ENCODE measurements at regions of chr11 and their contacts with region 1.

Region 1: DNA sequence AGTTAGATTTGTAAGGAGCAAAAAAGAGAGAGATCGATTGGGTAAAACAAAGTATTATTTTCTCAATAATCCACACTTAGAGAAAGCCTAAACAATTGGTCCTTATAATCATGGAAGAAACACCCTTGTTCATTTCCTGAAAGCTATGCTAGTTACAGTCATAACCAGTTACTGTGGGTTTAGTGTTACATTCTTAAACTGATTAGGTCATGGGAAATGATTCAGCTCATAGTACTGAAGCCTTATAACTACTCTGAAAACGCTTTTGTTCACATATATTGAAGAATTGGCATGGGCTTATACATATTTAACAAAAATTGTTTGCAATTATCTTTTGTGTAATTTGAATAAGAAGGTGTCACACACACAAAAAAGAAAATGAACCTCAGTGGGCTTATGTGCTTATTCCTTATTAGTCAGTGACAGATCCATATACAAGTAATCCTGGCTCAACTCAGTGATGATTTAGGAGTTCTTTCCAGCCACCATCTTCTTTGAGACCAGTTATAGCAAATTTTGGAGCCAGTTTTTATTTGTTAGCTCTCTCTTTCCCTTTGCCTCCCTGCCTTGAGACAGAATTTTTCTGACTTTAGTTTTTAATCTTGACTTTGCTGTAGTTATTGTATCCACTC is 198.5 kb upstream of the CTSC start:
- DNase-seq: peak; percentile 92
- H3K4me3 ChIP-seq: no peak overlapping the region
- H3K27ac ChIP-seq: peak overlapping the region; percentile 88
- H3K4me1 ChIP-seq: peaks cover 37% of the 10 kb centered on the region
- H3K27me3 ChIP-seq: no peaks in the 10 kb centered on the region
- CTCF ChIP-seq: no peak
- POLR2A ChIP-seq: peak; percentile 25

Region 2: GRCh38 chr11:88281317-88281712 is 254.7 kb before region 1 on chr11:
- CTCF ChIA-PET with region 1: no interaction called
- POLR2A ChIA-PET with region 1: no interaction called
- dilution Hi-C with region 1: no loop called
- intact Hi-C with region 1: loop called (anchors 5 kb)
- DNase-seq: no peak
- H3K4me3 ChIP-seq: no peak overlapping the region
- H3K27ac ChIP-seq: no peak overlapping the region
- H3K4me1 ChIP-seq: peaks cover 18% of the 10 kb centered on the region
- H3K27me3 ChIP-seq: no peaks in the 10 kb centered on the region
- CTCF ChIP-seq: no peak
- POLR2A ChIP-seq: no peak

Region 3: GRCh38 chr11:88337181-88337986 is 198.6 kb before region 1 on chr11 and contains the start of gene CTSC:
- CTCF ChIA-PET with region 1: interaction called, 3 read pairs
- POLR2A ChIA-PET with region 1: interaction called, 4 read pairs
- dilution Hi-C with region 1: no loop called
- intact Hi-C with region 1: loop called (anchors 2 kb)
- DNase-seq: peak; percentile 85
- H3K4me3 ChIP-seq: peak within 1 kb of the TSS; percentile 92 to 99 (median 95)
- H3K27ac ChIP-seq: peak within 1 kb of the TSS; percentile 78
- H3K4me1 ChIP-seq: peaks cover 27% of the 10 kb centered on the region
- H3K27me3 ChIP-seq: no peaks in the 10 kb centered on the region
- CTCF ChIP-seq: no peak
- POLR2A ChIP-seq: peak; percentile 96
- total RNA-seq, gene CTSC: 130 and 226 TPM in 2 replicates

Region 4: DNA sequence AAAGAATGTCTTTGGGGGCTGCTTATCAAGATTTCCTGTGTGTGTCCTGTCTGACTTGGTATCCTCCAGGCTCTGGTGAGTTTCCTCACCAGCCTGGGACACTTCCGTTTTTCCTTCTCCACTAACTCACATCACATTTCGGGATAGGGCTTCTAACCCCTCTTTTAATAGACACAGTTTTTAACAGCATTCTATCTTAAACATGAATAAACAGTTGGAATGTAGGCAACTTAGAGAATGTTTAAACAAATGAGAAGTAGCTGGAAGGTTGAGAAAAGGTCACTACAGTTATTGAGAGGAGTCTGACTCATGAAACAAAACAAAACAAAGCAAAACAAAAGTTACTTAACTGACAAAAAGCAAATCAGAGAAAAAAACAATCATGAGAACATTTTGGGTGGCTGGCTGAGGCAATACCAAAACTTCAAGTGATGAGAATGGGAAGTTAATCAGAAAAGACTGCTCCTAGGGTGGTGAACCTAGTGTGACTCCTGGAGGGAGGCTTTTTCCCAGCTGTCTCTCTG is 133.8 kb before region 1 on chr11:
- CTCF ChIA-PET with region 1: no interaction called
- POLR2A ChIA-PET with region 1: interaction called, 3 read pairs
- dilution Hi-C with region 1: no loop called
- intact Hi-C with region 1: loop called (anchors 2 kb)
- DNase-seq: peak; percentile 93
- H3K4me3 ChIP-seq: peak overlapping the region in 1 of 3 experiments; percentile 43
- H3K27ac ChIP-seq: peak overlapping the region; percentile 95
- H3K4me1 ChIP-seq: peaks cover 50% of the 10 kb centered on the region
- H3K27me3 ChIP-seq: no peaks in the 10 kb centered on the region
- CTCF ChIP-seq: no peak
- POLR2A ChIP-seq: no peak

Region 5: GRCh38 chr11:88484873-88485621 is 51.0 kb before region 1 on chr11:
- CTCF ChIA-PET with region 1: interaction called, 52 read pairs
- POLR2A ChIA-PET with region 1: no interaction called
- dilution Hi-C with region 1: no loop called
- intact Hi-C with region 1: no loop called
- DNase-seq: peak; percentile 37
- H3K4me3 ChIP-seq: no peak overlapping the region
- H3K27ac ChIP-seq: no peak overlapping the region
- H3K4me1 ChIP-seq: no peaks in the 10 kb centered on the region
- H3K27me3 ChIP-seq: no peaks in the 10 kb centered on the region
- CTCF ChIP-seq: peak; percentile 64 to 73
- POLR2A ChIP-seq: no peak

Region 6: GRCh38 chr11:88508759-88509581 is 27.1 kb before region 1 on chr11:
- CTCF ChIA-PET with region 1: interaction called, 3 read pairs
- POLR2A ChIA-PET with region 1: no interaction called
- dilution Hi-C with region 1: no loop called
- intact Hi-C with region 1: loop called (anchors 1 kb)
- DNase-seq: peak; percentile 57
- H3K4me3 ChIP-seq: peak overlapping the region in 2 of 3 experiments; percentile 6 to 47
- H3K27ac ChIP-seq: no peak overlapping the region
- H3K4me1 ChIP-seq: peaks cover 4% of the 10 kb centered on the region
- H3K27me3 ChIP-seq: no peaks in the 10 kb centered on the region
- CTCF ChIP-seq: no peak
- POLR2A ChIP-seq: no peak

Region 7: DNA sequence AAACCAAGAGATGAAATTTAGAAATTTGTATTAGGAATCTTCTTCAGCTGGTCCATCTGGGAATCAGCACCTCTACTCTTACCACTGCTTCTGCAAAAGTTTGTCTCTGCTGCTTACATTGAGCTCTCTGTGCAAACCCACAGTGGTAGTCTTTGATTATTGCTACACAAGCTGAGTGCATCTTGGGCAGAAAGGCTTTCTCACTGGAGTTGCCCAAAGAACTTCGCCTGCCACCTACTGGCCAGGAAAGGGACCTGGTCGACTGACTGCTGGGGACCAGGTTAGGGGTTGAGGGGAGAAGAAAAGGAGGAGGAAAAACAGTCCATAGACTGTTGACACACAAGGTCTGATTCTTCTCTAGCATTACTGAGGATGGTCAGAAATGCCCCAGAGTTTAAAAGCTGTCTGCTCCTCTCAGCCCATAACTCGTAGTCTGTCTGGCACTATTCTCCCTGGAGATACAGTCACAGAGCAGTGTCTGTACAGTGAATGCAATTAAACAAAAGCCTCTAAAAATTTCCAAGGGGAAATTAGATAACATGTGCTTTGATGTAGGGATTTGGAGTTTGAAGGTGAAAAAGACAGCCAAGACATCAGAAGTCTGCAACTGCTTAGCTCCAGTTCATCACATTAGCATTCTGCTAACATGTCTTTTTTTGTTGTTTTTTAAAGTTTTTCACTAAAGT is 16.5 kb after region 1 on chr11:
- CTCF ChIA-PET with region 1: interaction called, 10 read pairs
- POLR2A ChIA-PET with region 1: interaction called, 4 read pairs
- dilution Hi-C with region 1: no loop called
- intact Hi-C with region 1: loop called (anchors 1 kb)
- DNase-seq: no peak
- H3K4me3 ChIP-seq: no peak overlapping the region
- H3K27ac ChIP-seq: no peak overlapping the region
- H3K4me1 ChIP-seq: peaks cover 30% of the 10 kb centered on the region
- H3K27me3 ChIP-seq: no peaks in the 10 kb centered on the region
- CTCF ChIP-seq: peak; percentile 60 to 63
- POLR2A ChIP-seq: no peak

Region 8: GRCh38 chr11:88799771-88800500 is 263.9 kb after region 1 on chr11:
- CTCF ChIA-PET with region 1: no interaction called
- POLR2A ChIA-PET with region 1: no interaction called
- dilution Hi-C with region 1: no loop called
- intact Hi-C with region 1: no loop called
- DNase-seq: no peak
- H3K4me3 ChIP-seq: no peak overlapping the region
- H3K27ac ChIP-seq: no peak overlapping the region
- H3K4me1 ChIP-seq: no peaks in the 10 kb centered on the region
- H3K27me3 ChIP-seq: no peaks in the 10 kb centered on the region
- CTCF ChIP-seq: no peak
- POLR2A ChIP-seq: no peak